OCI-LY7 (cell line): ENCODE measurements at regions of chr5 and their contacts with region 1.

Region 1: GRCh38 chr5:132180134-132180745 is 47.4 kb downstream of the P4HA2 start:
- DNase-seq: peak; percentile 75
- H3K4me3 ChIP-seq: no peak overlapping the region
- H3K27ac ChIP-seq: no peak overlapping the region
- H3K4me1 ChIP-seq: peaks cover 43% of the 10 kb centered on the region
- CTCF ChIP-seq: peak; percentile 95

Region 2: DNA sequence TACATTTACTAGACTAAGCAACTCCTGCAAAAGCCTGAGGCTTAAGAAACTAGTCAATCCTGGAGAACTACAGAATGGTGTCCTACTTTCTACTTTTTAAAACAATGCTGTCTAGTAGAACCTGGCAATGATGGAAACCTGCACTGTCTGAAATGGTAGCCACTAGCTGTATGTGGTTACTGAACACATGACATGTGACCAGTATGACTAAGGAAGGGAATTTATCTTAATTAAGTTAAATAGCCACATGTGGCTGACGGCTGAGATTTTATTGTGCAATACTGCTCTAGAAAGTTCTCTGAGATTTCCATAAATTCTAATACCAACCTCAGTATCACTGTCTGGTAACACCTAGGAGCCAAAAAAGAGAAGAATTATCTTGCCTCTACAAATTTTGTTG is 500.3 kb before region 1 on chr5:
- CTCF ChIA-PET with region 1: no interaction called
- POLR2A ChIA-PET with region 1: no interaction called
- intact Hi-C with region 1: no loop called
- DNase-seq: no peak
- H3K4me3 ChIP-seq: no peak overlapping the region
- H3K27ac ChIP-seq: no peak overlapping the region
- H3K4me1 ChIP-seq: peaks cover 16% of the 10 kb centered on the region
- CTCF ChIP-seq: no peak

Region 3: DNA sequence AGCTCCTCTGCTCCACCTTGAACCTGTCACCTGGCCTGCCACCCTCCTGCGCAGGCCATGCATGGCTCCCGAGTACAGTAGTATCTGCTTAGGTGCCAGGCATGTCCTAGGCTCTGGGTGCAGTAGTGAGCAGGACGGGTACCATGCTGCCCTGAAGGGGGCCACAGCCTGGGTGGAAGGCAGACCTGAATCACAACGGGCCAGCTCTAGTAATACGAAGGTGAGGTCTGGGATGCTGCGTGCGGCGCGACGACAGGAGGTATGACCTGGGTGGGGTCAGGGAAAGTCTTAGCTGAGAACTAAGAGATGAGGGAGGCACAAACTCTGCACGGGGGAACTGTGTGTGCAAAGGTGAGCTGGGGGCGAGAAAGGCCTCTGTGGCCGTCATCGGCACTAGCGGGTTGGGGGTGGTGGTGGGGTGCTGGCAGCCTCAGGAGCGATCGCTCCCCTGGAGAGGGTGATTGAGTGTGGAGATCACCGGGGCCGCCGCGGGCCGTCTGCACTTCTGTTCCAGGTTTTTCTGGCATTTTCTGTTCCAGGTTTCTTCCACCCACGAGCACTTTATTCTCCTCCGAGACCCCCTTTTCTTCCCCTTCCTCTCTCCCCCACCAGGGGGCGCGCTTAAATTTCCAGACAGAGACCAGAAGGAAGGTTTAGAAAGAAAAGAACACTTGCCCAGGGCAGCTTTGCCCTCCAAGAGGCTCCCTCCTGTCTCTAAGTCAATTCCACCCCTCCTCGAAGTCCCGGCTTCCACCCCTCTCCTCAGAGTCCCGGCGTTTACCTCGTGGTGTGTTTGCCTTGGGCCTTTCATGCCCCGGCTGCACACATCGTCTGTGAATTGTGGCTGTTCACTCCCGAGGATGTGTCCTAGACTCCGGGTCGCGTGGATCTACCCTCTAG is 92.3 kb after region 1 on chr5:
- CTCF ChIA-PET with region 1: no interaction called
- POLR2A ChIA-PET with region 1: interaction called, 3 read pairs
- intact Hi-C with region 1: loop called (anchors 10 kb)
- DNase-seq: peak; percentile 57
- H3K4me3 ChIP-seq: no peak overlapping the region
- H3K27ac ChIP-seq: no peak overlapping the region
- H3K4me1 ChIP-seq: no peaks in the 10 kb centered on the region
- CTCF ChIP-seq: peak; percentile 92